ENCODE measurements at regions of chr1 and their contacts with region 1.

Region 1: DNA sequence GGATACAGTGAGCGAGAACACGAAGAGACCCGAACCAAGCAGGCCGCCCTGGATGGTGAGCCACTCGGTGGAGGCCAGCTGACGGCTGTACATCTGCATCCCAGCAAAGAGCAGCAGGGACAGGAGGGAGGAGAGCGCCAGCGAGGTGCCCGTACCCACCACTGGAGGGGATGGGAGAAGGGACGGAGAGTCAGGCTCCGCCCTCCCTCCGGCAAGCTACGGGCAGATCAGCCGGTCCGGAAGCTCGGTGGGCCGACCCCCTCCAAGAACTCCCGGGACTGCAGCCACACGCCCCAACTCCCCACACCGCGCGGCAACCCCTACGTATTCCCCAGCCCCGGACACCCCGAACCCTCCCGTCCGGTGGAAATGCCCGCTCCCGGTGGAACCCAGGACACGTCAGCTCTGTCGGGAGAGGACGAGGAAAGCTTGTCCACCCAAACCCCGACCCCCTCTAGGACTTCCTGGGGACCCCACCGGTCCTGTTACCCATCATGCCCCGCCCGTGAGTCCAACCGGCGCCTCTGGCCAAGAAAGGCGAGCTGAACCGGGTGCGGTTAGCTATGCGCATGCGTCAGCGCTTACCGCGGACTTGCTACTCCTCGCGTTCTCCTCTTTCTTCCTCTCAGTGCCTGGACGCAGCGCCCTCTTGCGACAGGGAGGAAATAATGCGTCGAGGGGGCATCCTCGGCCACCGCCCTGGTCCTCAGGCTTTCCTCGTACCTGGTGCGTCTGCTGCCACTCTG is at the start of gene KRTCAP2:
- DNase-seq: peak; percentile 97
- ATAC-seq: peak; percentile 83
- H3K4me3 Mint-ChIP-seq: peak within 1 kb of the TSS; percentile 98
- H3K27ac Mint-ChIP-seq: peak within 1 kb of the TSS; percentile 96
- H3K4me1 Mint-ChIP-seq: peaks cover 52% of the 10 kb centered on the region
- H3K27me3 Mint-ChIP-seq: no peaks in the 10 kb centered on the region
- total RNA-seq, gene KRTCAP2: 125 to 300 TPM

Region 2: DNA sequence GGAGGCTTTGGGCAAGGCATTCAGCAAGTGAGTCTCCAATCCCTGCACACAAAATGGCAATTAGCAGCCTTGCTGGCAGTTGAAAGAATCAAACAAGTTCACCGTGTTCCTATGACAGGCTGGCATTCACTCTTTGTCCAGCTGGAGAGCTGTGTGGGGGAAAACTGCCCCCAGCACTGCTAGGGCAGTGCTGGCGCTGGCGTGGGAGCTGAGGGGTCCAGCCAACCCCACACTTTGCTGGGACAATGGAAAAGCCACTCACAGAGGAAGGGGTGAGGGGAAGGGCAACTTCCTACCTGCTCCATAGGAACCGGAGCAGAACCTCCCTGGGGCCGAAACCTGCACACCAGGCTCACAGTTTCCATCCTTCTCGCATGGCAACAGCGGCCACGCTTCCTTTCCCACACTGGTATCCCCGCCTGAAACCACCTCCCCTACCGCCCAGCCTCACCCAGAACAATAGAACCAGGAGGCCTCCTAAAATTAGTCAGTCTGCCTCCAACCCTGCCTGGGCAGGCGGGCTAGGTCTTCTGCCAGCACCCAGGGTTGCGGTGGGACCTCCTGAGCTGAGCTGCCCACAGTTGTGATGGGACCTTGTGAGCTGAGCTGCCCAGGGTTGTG is 276.0 kb before region 1 on chr1:
- CTCF ChIA-PET with region 1: no interaction called
- POLR2A ChIA-PET with region 1: no interaction called
- intact Hi-C with region 1: no loop called
- DNase-seq: no peak
- ATAC-seq: no peak
- H3K4me3 Mint-ChIP-seq: no peak overlapping the region
- H3K27ac Mint-ChIP-seq: no peak overlapping the region
- H3K4me1 Mint-ChIP-seq: no peaks in the 10 kb centered on the region
- H3K27me3 Mint-ChIP-seq: peaks cover 2% of the 10 kb centered on the region

Region 3: DNA sequence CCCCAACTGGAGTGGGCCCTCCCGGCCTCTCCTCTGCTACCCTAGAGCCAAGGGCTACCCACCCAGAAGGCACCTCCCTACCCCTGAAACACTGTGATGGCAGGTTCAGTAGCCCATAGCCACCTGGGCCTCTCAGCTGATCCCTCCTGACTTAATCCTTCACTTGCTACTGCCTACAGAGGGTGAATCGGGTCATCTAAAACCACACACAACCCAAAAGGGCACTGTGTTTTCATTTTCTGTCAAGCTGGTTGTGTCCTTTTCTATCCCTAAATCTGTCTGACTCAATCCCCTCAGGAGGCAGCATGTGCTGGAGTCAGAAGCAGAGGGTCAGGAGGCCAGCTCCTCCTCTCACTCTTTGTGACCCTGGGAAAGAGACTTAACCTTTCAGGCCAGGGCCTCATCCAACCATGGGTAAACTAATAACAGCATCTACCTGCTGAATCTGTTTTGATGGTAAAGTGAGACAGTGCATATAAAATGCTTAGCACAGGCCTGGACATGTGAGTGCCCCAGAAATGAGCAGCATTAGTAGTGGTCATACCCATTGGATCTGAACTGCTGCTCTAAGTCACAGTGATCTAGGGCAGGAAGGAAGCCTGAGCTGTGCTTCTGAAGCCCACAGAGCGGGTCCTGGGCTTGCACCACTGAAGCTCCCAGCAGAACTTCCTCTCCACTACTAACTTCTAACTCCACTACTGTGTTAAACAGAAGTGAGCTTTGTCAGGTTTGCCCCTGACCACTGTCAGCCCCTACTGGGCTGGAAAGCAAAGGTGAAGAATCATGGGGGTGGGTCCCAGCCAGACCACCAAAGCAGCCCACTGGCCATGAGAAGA is 247.4 kb before region 1 on chr1:
- CTCF ChIA-PET with region 1: no interaction called
- POLR2A ChIA-PET with region 1: no interaction called
- intact Hi-C with region 1: no loop called
- DNase-seq: no peak
- ATAC-seq: no peak
- H3K4me3 Mint-ChIP-seq: no peak overlapping the region
- H3K27ac Mint-ChIP-seq: no peak overlapping the region
- H3K4me1 Mint-ChIP-seq: peaks cover 2% of the 10 kb centered on the region
- H3K27me3 Mint-ChIP-seq: no peaks in the 10 kb centered on the region

Region 4: GRCh38 chr1:155050560-155051341 is 122.2 kb before region 1 on chr1 and contains the start of gene ADAM15:
- CTCF ChIA-PET with region 1: interaction called, 9 read pairs
- POLR2A ChIA-PET with region 1: interaction called, 5 read pairs
- intact Hi-C with region 1: loop called in 1 of 2 experiments (anchors 2 kb)
- DNase-seq: peak; percentile 90
- ATAC-seq: peak; percentile 78
- H3K4me3 Mint-ChIP-seq: peak within 1 kb of the TSS; percentile 74
- H3K27ac Mint-ChIP-seq: peak within 1 kb of the TSS; percentile 80
- H3K4me1 Mint-ChIP-seq: peaks cover 20% of the 10 kb centered on the region
- H3K27me3 Mint-ChIP-seq: no peaks in the 10 kb centered on the region
- total RNA-seq, gene ADAM15: 42.4 to 48.8 TPM

Region 5: DNA sequence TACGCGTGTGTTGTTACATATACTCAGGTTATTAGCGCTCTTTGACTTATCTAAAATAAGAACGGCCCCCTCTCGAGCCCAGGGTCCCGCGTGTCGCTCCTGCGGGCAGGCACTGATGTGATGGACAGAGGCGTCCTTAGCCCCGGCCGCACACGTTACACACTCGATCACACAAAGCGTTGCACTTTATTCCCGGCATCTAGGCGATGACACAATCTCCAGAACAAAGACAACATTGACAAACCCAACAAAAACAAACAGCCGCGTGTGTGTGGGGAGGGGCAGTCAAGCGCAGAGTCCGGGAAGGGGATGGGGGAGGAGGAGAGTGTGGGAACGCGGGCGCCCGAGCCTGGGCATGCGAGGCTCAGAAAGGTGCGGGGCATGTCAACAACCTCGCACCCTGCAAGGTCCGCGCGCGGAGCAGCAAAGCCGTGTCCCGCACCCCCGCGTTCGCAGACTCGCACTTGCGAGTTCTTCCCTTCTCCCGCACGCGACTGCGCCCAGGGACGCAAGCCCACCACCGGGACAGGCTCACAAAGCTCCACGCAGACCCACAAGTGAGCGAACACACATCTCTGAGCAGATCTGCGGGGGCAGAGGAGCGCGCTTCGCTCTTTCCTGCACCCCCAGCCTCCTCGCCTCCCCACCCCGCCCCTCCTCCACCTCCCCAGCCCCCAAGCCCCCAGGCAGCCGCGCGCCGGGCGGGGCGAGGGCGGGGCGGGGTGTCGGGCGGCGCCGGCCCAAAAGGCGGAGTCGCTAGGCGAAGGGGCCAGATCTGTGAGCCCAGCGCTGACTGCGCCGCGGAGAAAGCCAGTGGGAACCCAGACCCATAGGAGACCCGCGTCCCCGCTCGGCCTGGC is 45.6 kb before region 1 on chr1 and contains the start of gene EFNA1:
- CTCF ChIA-PET with region 1: interaction called, 10 read pairs
- POLR2A ChIA-PET with region 1: no interaction called
- intact Hi-C with region 1: no loop called
- DNase-seq: peak; percentile 55
- ATAC-seq: peak; percentile 48
- H3K4me3 Mint-ChIP-seq: peak within 1 kb of the TSS; percentile 66
- H3K27ac Mint-ChIP-seq: peak within 1 kb of the TSS; percentile 55
- H3K4me1 Mint-ChIP-seq: peaks cover 32% of the 10 kb centered on the region
- H3K27me3 Mint-ChIP-seq: peaks cover 20% of the 10 kb centered on the region
- total RNA-seq, gene EFNA1: 0.82 to 1.1 TPM

Region 6: DNA sequence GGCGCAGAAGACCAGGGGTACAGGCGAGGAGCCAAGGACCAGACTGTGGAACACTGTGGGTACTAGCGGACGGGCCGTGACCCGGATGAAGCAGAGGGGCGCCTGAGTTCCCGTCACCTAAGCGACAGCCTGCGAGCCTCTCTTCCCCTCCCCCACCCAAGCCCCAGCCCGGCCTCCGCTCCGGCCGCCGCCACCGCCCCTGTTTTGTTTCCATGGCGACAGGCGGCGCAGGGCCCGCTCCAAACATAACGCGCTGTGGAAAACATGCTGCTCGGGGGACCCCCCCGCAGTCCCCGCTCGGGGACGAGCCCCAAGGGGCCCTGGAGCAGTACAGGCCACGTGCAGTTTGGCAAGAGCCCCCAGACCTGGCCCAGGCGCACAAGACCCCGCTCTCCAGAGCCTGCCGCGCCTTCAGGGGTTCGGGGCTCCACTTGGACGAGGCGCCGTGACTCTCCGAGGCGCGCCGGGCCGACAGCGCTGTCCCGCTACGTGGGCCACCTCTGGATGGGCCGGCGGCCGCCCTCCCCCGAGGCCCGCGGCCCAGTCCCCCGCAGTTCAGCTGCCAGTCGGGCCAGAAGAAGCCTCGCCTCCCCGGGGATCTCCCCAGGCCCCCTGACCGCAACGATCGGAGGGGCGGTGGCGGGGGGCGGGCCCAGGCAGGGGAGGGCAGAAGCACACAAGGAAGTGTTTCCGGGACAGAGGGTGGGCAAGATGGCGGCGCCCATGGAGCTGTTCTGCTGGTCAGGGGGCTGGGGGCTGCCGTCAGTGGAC is 35.8 kb after region 1 on chr1 and contains the start of gene MTX1:
- CTCF ChIA-PET with region 1: interaction called, 6 read pairs
- POLR2A ChIA-PET with region 1: interaction called, 3 read pairs
- intact Hi-C with region 1: loop called in 1 of 2 experiments (anchors 1 kb)
- DNase-seq: peak; percentile 93
- ATAC-seq: peak; percentile 87
- H3K4me3 Mint-ChIP-seq: peak within 1 kb of the TSS; percentile 89
- H3K27ac Mint-ChIP-seq: peak within 1 kb of the TSS; percentile 86
- H3K4me1 Mint-ChIP-seq: peaks cover 29% of the 10 kb centered on the region
- H3K27me3 Mint-ChIP-seq: no peaks in the 10 kb centered on the region
- total RNA-seq, gene MTX1: 52.8 to 52.9 TPM

Measured in activated CD4-positive, alpha-beta T cell treated with anti-CD3 and anti-CD28 coated beads for 36 hours (primary cell).